Activated naive CD8-positive, alpha-beta T cell treated with anti-CD3 and anti-CD28 coated beads, Interleukin-2, amount 10 ng/mL, durations not matched to agents 7 days and 5 days (primary cell): ENCODE measurements at regions of chr7 and their contacts with region 1.

Region 1: GRCh38 chr7:130912862-130913631 is 179.0 kb upstream of the KLF14 start:
- DNase-seq: peak; percentile 77
- ATAC-seq: peak; percentile 89
- H3K4me3 Mint-ChIP-seq: peak overlapping the region; percentile 86
- H3K27ac Mint-ChIP-seq: peak overlapping the region; percentile 95
- H3K4me1 Mint-ChIP-seq: peaks cover 77% of the 10 kb centered on the region
- H3K27me3 Mint-ChIP-seq: no peaks in the 10 kb centered on the region

Region 2: DNA sequence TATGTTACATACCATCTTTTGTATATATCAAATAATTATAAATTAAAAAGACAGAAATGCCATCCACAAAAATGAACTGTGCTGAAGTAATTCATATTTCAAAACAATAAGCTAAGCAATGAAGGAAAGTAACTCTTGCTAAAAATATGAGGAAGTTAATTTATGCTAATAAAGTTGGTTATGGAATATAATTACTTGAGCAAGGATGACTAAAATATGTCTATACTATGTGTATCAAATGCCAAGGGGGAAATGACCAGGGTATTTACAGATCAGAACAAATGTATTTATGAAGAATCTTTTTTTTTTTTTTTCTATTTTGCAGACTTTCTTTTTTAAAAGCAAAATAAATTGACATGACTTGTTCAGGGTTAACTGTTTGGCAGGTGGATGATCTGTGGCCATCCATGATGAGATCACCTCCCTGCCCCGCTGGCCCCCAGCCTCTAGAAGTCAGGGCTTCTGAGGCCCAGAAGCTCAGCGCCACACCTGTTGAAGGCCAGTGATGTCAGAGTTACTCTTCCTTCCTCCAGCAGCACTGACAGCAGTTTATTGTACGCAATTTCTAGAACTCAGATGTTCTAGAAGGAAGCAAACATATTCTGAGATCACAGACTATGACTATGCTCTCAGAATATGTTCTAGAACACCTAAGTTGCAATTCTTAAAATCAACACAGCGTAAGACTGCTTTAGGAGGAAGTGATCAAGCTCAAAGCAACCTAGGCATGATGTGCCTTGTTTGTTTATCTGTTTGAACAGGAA is 17.0 kb after region 1 on chr7:
- POLR2A ChIA-PET with region 1: interaction called, 10 read pairs
- DNase-seq: no peak
- ATAC-seq: peak; percentile 36
- H3K4me3 Mint-ChIP-seq: no peak overlapping the region
- H3K27ac Mint-ChIP-seq: peak overlapping the region; percentile 1
- H3K4me1 Mint-ChIP-seq: peaks cover 53% of the 10 kb centered on the region
- H3K27me3 Mint-ChIP-seq: no peaks in the 10 kb centered on the region

Region 3: GRCh38 chr7:130939321-130940095 is 26.5 kb after region 1 on chr7:
- POLR2A ChIA-PET with region 1: interaction called, 17 read pairs
- DNase-seq: no peak
- ATAC-seq: no peak
- H3K4me3 Mint-ChIP-seq: peak overlapping the region; percentile 15
- H3K27ac Mint-ChIP-seq: peak overlapping the region; percentile 68
- H3K4me1 Mint-ChIP-seq: peaks cover 67% of the 10 kb centered on the region
- H3K27me3 Mint-ChIP-seq: no peaks in the 10 kb centered on the region

Region 4: DNA sequence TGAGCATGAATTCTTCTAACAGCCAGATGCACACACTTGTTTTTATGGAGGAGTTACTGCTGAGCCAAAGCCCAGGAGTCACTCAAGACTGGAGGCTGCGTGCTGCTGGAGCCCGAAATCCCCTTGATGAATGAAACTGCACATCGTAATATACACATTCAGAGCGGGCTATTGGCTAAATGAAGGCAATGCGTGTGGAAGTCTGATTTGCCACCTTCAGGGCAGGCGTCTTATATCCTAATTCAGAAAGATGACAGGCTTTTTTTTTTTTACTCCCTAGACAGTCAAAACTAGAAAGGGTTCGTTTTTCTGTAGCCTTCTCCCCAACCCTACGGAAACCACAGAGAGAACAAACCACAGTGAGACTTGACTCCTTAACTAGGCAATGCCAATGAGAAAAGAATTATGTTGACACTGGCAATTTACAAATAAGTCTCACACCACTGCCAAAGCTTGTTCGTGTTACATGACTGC is 48.1 kb after region 1 on chr7:
- POLR2A ChIA-PET with region 1: interaction called, 62 read pairs
- DNase-seq: peak; percentile 74
- ATAC-seq: peak; percentile 84
- H3K4me3 Mint-ChIP-seq: peak overlapping the region; percentile 99
- H3K27ac Mint-ChIP-seq: peak overlapping the region; percentile 100
- H3K4me1 Mint-ChIP-seq: peaks cover 40% of the 10 kb centered on the region
- H3K27me3 Mint-ChIP-seq: no peaks in the 10 kb centered on the region

Region 5: GRCh38 chr7:131021460-131021859 is 108.4 kb after region 1 on chr7:
- POLR2A ChIA-PET with region 1: no interaction called
- DNase-seq: no peak
- ATAC-seq: peak; percentile 24
- H3K4me3 Mint-ChIP-seq: peak overlapping the region; percentile 18
- H3K27ac Mint-ChIP-seq: peak overlapping the region; percentile 36
- H3K4me1 Mint-ChIP-seq: peaks cover 26% of the 10 kb centered on the region
- H3K27me3 Mint-ChIP-seq: no peaks in the 10 kb centered on the region